Aorta (tissue), 5 donors: ENCODE measurements at regions of chr11 and their contacts with region 1.

Region 1: DNA sequence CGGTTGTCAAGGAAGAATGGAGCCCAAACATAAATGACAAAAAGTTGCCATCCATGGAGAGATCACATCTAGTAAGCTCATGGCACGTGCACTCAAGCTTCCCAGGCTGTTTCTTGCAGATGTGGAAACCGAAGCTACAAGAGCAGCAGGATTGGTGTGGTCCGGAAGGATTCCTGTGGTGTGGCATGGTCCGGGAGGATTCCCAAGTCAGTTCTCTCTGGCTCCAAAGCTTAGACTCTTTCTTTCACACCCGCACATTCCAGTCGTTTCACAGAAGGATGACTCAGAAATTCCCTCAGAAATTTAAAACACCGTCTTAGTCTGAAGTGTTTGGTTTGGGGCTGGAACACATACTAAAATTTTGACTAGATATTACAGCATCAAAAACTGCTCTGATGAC is 78.0 kb upstream of the DRD2 start:
- DNase-seq: peak in 1 of 2 donors; percentile 57
- ATAC-seq: peak; percentile 22
- H3K4me3 ChIP-seq: no peak overlapping the region
- H3K27ac ChIP-seq: no peak overlapping the region
- H3K4me1 ChIP-seq: peaks cover 0 to 2% of the 10 kb centered on the region in 2 donors
- H3K27me3 ChIP-seq: no peaks in the 10 kb centered on the region

Region 2: GRCh38 chr11:113603277-113604059 is 50.2 kb after region 1 on chr11:
- intact Hi-C with region 1: no loop called
- DNase-seq: peak in 1 of 2 donors; percentile 69
- ATAC-seq: peak; percentile 68
- H3K4me3 ChIP-seq: no peak overlapping the region
- H3K27ac ChIP-seq: peak overlapping the region in 1 of 2 donors; percentile 19
- H3K4me1 ChIP-seq: peaks cover 0 to 3% of the 10 kb centered on the region in 2 donors
- H3K27me3 ChIP-seq: no peaks in the 10 kb centered on the region

Region 3: DNA sequence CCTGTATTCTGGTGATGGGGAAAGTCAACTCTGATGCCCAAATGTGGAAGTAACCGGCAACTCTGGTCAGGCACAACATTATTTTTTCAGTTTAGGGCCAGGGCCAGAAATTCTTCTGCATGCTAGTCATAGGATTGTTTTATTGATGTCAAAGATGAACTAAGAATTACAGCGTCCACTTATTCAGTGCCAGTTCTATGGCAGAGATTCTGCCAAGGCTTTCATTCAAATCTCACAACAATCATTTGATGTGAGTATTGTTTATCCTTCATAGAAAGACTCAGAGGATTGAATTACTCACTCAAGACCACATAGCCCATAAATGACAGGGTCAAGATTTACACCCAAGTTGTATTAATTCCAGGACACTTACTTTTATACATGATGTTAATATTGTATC is 65.1 kb after region 1 on chr11:
- intact Hi-C with region 1: loop called (anchors 10 kb)
- DNase-seq: no peak
- ATAC-seq: peak; percentile 67
- H3K4me3 ChIP-seq: no peak overlapping the region
- H3K27ac ChIP-seq: peak overlapping the region in 1 of 2 donors; percentile 80
- H3K4me1 ChIP-seq: peaks cover 2 to 3% of the 10 kb centered on the region in 2 donors
- H3K27me3 ChIP-seq: no peaks in the 10 kb centered on the region

Region 4: GRCh38 chr11:113651023-113651422 is 97.8 kb after region 1 on chr11:
- intact Hi-C with region 1: no loop called
- DNase-seq: no peak
- ATAC-seq: no peak
- H3K4me3 ChIP-seq: no peak overlapping the region
- H3K27ac ChIP-seq: no peak overlapping the region
- H3K4me1 ChIP-seq: no peaks in the 10 kb centered on the region
- H3K27me3 ChIP-seq: no peaks in the 10 kb centered on the region